OCI-LY7 (cell line): ENCODE measurements at regions of chr12 and their contacts with region 1.

Region 1: GRCh38 chr12:10205251-10205807 is 7.3 kb upstream of the GABARAPL1 start:
- DNase-seq: no peak
- H3K4me3 ChIP-seq: no peak overlapping the region
- H3K27ac ChIP-seq: peak overlapping the region; percentile 44
- H3K4me1 ChIP-seq: peaks cover 49% of the 10 kb centered on the region
- CTCF ChIP-seq: no peak

Region 2: GRCh38 chr12:9925708-9926393 is 279.5 kb before region 1 on chr12:
- CTCF ChIA-PET with region 1: no interaction called
- POLR2A ChIA-PET with region 1: no interaction called
- intact Hi-C with region 1: no loop called
- DNase-seq: peak; percentile 56
- H3K4me3 ChIP-seq: no peak overlapping the region
- H3K27ac ChIP-seq: no peak overlapping the region
- H3K4me1 ChIP-seq: peaks cover 11% of the 10 kb centered on the region
- CTCF ChIP-seq: peak; percentile 87

Region 3: DNA sequence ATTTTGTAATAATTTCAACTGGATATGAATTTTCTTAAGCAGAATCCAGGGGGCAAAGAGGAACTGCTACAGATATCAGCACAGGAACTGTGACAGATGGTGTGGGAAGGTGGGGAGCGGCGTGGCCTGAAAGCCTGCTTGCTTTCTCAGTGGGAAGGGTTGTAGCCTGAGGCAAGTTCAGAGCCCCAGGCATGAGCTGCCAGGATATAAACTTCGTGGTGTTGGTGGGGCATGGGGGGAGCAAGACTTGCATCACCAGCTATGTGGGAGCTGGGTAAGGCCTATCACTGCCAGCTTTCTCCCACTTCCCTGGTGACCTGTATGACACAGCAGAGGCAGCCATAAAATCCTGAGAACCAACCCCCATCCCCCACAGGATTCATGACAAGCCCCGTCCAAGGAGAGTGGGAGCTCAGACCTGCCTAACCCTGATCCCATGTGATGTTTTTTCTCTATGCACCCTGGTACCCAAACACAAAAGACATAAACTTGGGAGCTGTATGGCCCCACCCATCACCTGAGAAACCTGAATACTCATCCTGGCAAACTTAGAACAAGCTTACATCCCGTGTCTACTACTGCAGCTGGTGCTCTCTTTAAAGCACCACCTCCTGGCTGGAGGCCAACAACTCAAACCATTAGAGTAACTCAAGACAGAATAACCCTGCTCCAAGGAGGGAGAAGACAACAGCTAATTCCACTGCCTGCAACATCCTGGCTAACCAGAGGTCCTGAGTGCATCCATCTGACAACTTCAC is 123.0 kb before region 1 on chr12:
- CTCF ChIA-PET with region 1: no interaction called
- POLR2A ChIA-PET with region 1: no interaction called
- intact Hi-C with region 1: no loop called
- DNase-seq: no peak
- H3K4me3 ChIP-seq: no peak overlapping the region
- H3K27ac ChIP-seq: no peak overlapping the region
- H3K4me1 ChIP-seq: no peaks in the 10 kb centered on the region
- CTCF ChIP-seq: no peak

Region 4: GRCh38 chr12:10167588-10167987 is 37.7 kb before region 1 on chr12:
- CTCF ChIA-PET with region 1: no interaction called
- POLR2A ChIA-PET with region 1: interaction called, 11 read pairs
- intact Hi-C with region 1: no loop called
- DNase-seq: no peak
- H3K4me3 ChIP-seq: no peak overlapping the region
- H3K27ac ChIP-seq: no peak overlapping the region
- H3K4me1 ChIP-seq: peaks cover 11% of the 10 kb centered on the region
- CTCF ChIP-seq: no peak